Activated CD4-positive, alpha-beta T cell treated with anti-CD3 and anti-CD28 coated beads, Interleukin-2, amount 10 ng/mL, durations not matched to agents 24 days and 14 days (primary cell): ENCODE measurements at regions of chr7 and their contacts with region 1.

Region 1: DNA sequence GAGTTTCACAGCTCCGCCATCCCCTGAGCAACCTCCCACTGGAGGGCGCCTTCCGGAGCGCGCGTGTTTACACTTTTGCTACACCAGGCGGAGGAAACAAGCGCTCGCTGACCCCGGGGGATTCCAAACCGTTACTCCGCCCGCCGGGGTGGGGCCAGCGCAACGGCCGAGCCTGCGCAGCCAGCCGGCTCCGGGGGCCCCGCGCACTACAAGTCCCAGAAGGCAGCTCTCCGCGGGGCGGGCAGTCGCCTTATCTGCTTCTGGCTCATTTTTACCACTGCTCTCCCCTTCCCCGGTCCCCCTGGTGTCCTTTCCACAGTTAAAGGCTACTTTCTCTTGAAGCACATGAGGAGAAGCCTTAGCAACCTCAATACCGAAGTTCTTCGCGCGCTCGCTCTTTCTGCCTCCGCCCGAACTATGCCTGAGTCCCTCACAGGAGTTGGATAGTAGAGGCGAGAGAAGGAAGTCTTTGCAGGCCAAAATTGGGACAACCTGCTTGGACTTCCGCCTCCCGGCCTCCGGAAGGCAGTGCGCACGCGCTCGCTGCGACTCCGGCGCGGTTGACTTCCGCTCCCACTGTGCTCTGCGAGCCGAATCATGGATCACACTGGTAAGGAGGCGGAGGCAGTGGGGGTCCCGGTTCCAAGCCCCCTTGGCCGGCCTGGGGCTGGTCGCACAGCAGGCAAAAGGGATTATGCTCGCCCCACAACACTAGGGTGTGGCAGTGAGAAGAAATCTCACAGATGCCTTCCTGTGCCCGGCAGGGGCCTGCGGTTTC is at the start of gene CBLL1:
- DNase-seq: peak; percentile 100
- H3K4me3 Mint-ChIP-seq: peak within 1 kb of the TSS; percentile 91
- H3K27ac Mint-ChIP-seq: peak within 1 kb of the TSS; percentile 99
- H3K4me1 Mint-ChIP-seq: peaks cover 25% of the 10 kb centered on the region
- H3K27me3 Mint-ChIP-seq: peaks cover 1% of the 10 kb centered on the region
- total RNA-seq, gene CBLL1: 48.7 and 50.7 TPM in 2 replicates

Region 2: DNA sequence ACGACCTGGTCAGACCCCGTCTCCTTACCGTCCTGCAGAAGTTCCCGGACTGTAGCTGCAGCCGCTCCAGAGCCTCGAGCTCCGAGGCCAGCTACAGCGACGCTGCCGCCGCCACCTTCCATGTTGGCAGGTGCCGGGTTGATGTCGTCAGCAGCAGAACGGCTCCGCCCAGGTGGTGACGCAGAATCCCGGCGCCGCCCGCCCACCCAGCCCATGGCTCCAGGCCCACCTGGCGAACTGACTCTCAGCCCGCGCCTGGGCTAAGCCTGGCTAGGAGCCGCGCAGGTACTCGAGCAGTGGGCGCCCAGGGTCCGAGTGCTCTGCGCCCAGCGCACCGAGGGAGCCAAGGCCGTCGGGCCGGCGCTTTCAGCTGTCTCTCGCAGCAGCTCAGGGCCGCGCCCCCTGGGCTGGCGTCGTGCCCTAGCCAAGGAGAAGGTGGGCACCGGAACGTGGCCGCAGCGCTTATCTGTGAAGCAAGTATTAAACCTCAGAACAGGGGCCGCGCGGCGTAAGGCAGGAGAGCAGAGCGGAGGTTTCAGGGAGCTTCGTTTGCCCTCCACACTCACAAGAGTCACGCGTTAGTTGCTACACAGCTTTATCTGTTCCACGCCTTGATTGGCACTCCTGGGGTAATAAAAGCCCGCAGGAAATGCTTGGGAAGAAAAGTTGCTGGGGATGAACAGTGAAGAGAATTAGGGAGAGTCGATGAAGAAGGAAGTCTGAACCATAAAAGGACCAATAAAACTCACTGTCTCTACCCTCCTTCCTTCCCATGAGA is 179.8 kb before region 1 on chr7 and contains the starts of genes COG5 and DUS4L:
- intact Hi-C with region 1: loop called (anchors 2 kb)
- DNase-seq: peak; percentile 95
- H3K4me3 Mint-ChIP-seq: peak within 1 kb of the TSS; percentile 85
- H3K27ac Mint-ChIP-seq: peak within 1 kb of the TSS; percentile 85
- H3K4me1 Mint-ChIP-seq: peaks cover 50% of the 10 kb centered on the region
- H3K27me3 Mint-ChIP-seq: no peaks in the 10 kb centered on the region
- total RNA-seq, gene COG5: 40.9 and 43.3 TPM in 2 replicates
- total RNA-seq, gene DUS4L: 12.9 and 14.9 TPM in 2 replicates

Region 3: GRCh38 chr7:107661081-107661864 is 82.5 kb before region 1 on chr7:
- intact Hi-C with region 1: loop called (anchors 5 kb)
- DNase-seq: peak; percentile 90
- H3K4me3 Mint-ChIP-seq: peak overlapping the region; percentile 97
- H3K27ac Mint-ChIP-seq: peak overlapping the region; percentile 90
- H3K4me1 Mint-ChIP-seq: peaks cover 41% of the 10 kb centered on the region
- H3K27me3 Mint-ChIP-seq: no peaks in the 10 kb centered on the region

Region 4: GRCh38 chr7:107865956-107866775 is 122.4 kb after region 1 on chr7:
- intact Hi-C with region 1: loop called (anchors 2 kb)
- DNase-seq: no peak
- H3K4me3 Mint-ChIP-seq: peak overlapping the region; percentile 48
- H3K27ac Mint-ChIP-seq: peak overlapping the region; percentile 87
- H3K4me1 Mint-ChIP-seq: peaks cover 20% of the 10 kb centered on the region
- H3K27me3 Mint-ChIP-seq: no peaks in the 10 kb centered on the region

Region 5: DNA sequence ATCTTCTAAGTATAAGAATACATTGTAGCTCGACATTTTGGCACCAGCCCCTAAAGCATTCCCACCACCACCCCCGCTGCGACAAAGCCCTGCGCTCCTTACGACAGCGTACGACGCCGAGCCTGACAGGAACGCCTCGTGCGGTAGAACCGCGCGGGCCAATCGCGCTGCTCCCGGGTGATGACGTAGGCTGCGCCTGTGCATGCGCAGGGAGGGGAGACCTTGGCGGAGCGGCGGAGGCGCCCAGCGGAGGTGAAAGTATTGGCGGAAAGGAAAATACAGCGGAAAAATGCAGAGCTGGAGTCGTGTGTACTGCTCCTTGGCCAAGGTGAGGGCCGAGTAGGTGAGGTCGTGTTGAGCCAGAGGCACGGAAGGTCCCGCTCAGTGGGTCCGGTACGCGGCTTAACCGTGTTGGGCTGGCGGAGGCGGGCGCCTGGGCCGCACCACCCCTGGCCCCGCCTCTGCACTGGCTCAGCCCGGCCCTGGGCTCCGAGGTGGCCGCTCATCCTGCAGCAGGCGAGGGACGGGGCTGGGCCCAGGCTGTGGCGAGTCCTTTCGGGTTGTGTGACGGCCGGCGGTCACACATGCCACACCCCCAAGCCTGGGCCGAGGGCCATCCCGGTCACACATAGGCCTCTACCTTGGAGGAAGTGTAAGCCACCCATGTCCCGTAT is 147.3 kb after region 1 on chr7 and contains the start of gene DLD:
- intact Hi-C with region 1: loop called (anchors 1 kb)
- DNase-seq: peak; percentile 99
- H3K4me3 Mint-ChIP-seq: peak within 1 kb of the TSS; percentile 100
- H3K27ac Mint-ChIP-seq: peak within 1 kb of the TSS; percentile 99
- H3K4me1 Mint-ChIP-seq: peaks cover 41% of the 10 kb centered on the region
- H3K27me3 Mint-ChIP-seq: peaks cover 2% of the 10 kb centered on the region
- total RNA-seq, gene DLD: 113 and 119 TPM in 2 replicates

Region 6: DNA sequence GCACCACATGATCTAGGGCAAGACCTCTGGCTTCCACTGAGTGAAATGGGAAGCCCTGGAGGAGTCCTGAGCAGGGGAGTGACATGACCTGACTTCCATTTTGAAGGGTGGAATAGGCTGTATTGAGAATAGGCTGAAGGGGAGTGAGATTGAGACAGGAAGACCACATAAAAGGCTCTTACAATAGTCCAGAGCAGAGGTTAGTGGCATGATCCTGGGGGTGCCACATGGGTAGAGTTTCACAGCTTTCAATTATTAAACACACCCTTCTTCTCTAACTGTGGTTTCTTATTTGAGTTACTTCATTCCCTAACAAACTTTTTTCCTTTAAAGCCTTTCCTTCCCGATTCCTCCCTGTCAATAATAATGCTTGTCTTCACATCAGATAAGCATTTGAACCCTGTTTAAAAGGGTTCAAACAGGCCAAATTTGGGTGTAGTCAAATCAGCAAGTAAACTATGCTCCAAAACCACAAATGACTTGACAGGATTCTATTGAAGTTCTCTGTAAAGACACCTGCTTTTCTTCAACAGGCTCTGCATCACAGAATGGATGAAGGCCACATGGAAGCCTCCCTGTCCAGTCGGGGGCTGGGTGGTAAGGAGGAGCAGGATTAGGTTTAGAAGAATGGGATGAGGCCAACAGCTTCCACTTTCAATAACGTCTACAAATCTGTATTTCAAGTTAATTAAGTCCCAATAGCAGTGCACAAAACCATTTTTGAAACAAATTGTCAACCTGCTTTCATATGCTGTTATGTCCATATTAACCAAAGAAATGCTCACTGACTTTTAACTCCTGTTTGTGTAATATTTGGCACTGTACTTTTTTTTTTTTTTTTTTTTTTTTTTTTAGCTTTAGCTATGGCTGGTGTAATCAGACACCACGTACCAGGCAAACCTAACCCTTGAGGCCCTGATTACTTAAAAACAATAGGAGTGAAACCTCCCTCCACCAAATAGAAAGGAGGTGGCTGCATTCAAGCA is 580.6 kb after region 1 on chr7:
- intact Hi-C with region 1: no loop called
- DNase-seq: no peak
- H3K4me3 Mint-ChIP-seq: no peak overlapping the region
- H3K27ac Mint-ChIP-seq: no peak overlapping the region
- H3K4me1 Mint-ChIP-seq: peaks cover 2% of the 10 kb centered on the region
- H3K27me3 Mint-ChIP-seq: peaks cover 1% of the 10 kb centered on the region

Region 7: GRCh38 chr7:108569381-108570145 is 825.8 kb after region 1 on chr7 and contains the starts of genes DNAJB9 and THAP5:
- intact Hi-C with region 1: loop called (anchors 10 kb)
- DNase-seq: peak; percentile 100
- H3K4me3 Mint-ChIP-seq: peak within 1 kb of the TSS; percentile 100
- H3K27ac Mint-ChIP-seq: peak within 1 kb of the TSS; percentile 100
- H3K4me1 Mint-ChIP-seq: peaks cover 39% of the 10 kb centered on the region
- H3K27me3 Mint-ChIP-seq: no peaks in the 10 kb centered on the region
- total RNA-seq, gene DNAJB9: 11.5 and 12.7 TPM in 2 replicates
- total RNA-seq, gene THAP5: 35.6 TPM in 2 replicates